ENCODE measurements at regions of chr3 and their contacts with region 1.

Region 1: DNA sequence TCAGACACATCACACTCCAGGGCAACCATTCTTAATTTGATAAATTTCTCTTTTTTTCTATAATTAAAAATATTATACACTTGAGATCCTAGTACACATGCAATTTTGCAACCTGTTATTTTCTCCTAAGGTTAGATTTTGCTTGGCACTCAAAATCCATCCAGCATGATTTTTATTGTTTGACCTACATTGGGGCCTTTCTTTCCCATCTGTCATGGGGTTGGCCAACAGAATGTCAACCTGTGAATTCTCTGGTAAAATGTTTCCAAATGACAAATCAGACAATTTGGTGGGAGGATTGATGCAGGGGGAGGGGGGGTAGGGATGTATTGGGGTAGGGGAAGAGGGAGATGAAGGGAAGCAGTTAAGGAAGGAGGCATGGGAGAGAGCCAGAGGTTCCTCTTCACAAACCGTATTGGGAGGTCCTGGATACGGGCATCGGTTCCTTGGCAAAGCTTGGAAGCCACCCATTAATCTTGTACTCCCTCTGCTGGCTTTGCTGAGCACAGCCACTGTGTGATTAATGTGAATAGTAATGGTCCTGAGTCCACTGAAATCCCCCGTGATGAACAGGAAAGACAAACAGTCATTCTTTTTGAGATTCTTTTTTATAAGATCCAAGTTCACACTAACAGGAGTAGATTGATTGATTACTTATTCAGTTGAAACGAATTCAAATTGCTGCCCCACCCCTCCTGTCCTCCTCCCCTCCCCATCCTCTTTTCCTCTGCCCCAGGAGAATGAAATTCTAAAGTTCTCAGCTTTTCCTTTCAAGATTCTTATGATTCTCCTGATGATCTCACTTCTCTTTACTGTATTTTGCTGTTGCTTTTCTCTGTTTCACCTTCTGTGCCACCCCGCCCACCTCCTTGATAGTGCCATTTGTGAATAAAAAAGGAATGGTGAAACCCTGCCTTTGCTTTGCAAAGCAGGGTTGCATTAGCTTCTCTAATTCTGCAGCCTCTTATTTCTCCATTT is 82.2 kb upstream of the SLC25A26 start:
- DNase-seq: peak; percentile 53
- H3K4me3 ChIP-seq: no peak overlapping the region
- H3K27ac ChIP-seq: no peak overlapping the region
- H3K4me1 ChIP-seq: no peaks in the 10 kb centered on the region
- H3K27me3 ChIP-seq: no peaks in the 10 kb centered on the region
- CTCF ChIP-seq: peak; percentile 56

Region 2: DNA sequence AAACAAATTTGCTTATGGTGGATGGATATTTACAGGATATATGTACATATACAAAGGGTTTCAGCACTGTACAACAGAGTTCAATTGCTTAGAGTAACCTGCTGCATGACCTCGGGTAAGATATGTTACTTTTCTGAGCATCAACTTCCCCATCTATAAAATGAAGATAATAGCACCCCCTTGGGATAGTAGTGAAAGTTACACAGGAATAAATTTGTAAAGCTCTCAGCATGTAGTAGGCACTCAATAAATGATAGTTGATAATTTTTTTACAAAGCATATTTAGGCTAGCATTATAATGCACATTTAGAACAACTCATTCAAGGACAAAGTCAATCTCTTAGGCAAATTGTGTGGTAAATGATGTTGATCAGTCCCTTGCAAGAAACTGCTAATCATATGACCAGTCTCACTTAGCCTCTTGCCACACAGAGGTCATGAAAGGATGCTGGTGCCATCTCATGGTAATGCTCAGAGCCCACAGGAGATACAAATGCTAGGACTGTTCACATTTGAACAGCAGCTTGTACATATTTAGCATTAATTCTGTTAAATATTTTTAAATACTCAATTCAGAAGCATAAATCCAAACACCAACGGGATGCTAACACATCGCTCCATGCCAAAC is 223.8 kb before region 1 on chr3:
- intact Hi-C with region 1: loop called (anchors 10 kb)
- DNase-seq: no peak
- H3K4me3 ChIP-seq: no peak overlapping the region
- H3K27ac ChIP-seq: no peak overlapping the region
- H3K4me1 ChIP-seq: no peaks in the 10 kb centered on the region
- H3K27me3 ChIP-seq: no peaks in the 10 kb centered on the region
- CTCF ChIP-seq: no peak

Region 3: GRCh38 chr3:66450390-66451022 is 311.9 kb after region 1 on chr3:
- intact Hi-C with region 1: no loop called
- DNase-seq: peak; percentile 81
- H3K4me3 ChIP-seq: no peak overlapping the region
- H3K27ac ChIP-seq: peak overlapping the region; percentile 48
- H3K4me1 ChIP-seq: peaks cover 14% of the 10 kb centered on the region
- H3K27me3 ChIP-seq: no peaks in the 10 kb centered on the region
- CTCF ChIP-seq: no peak

Measured in colonic mucosa (tissue), 4 donors.